ENCODE measurements at regions of chr7 and their contacts with region 1.

Region 1: GRCh38 chr7:107147464-107148393 is 21.1 kb upstream of the HBP1 start:
- DNase-seq: peak; percentile 34
- CTCF ChIP-seq: peak; percentile 73

Region 2: DNA sequence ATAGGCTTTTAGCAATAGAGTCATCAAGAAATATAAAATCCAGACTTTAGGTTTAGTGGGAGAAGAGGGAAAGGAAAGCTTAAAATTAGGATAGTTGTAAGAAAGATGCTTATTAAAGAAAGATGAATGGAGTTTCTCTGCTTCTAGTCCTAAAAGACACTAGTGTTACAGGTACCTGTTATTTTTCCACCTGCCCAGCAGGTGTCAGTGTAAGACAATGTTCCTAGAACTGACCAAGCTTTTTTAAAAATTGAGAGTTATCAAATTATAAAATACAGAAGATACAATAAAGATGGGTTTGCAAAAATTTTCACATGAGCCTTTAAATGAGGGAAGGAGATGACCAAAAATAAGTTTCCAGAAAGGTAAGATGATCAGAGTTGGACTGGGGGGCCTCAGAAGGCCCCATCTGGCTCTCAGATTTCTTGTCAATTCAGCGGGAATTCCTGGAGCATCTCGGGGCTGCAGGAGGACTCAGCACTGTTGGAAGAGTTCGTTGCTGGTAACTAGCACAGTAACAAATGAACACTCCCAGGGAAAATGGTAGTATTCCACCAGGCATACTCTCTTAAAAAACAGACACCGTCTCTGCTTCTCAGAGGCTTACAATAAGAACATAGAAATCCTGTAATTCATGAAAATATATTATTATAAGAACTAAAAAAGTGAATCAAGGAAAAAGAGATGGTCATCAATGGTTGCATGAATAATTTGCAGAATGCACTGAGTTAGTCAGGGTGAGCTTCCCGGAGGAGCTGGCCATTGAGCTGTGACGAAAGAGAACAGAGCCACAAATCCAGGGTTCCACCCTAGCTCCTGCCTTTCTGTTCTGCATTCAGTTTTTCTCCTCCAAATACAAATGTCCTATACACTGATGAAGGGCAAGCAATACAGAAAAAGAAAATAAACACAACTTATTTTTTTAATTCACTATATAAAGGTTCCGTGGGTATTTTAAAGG is 354.4 kb before region 1 on chr7:
- in situ Hi-C with region 1: loop called (anchors 5 kb)
- DNase-seq: peak; percentile 44
- CTCF ChIP-seq: peak; percentile 53

Region 3: GRCh38 chr7:106959753-106960152 is 188.0 kb before region 1 on chr7:
- in situ Hi-C with region 1: loop called (anchors 10 kb)
- DNase-seq: no peak
- CTCF ChIP-seq: no peak

Region 4: DNA sequence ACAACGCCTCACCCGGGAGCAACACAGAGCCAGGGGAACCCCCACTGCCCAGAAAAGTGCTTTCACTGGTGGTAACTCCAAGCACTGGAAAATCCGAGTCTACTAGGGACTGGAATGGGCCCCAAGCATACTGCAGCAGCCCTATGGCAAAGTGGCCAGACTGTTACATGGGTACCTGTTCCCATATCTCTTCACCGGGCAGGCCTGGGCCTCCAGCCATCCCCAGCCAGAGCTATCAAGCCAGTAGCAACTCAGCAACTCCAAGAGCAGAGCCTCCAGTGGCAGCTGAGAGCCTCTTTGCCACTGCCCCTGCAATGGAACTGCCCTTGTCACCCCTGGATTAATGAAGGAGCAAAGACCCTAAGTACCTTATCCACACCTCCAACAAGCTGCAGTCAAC is 94.5 kb after region 1 on chr7:
- in situ Hi-C with region 1: no loop called
- DNase-seq: no peak
- CTCF ChIP-seq: no peak

Measured in GM13976 (cell line).